Activated CD4-positive, alpha-beta T cell treated with anti-CD3 and anti-CD28 coated beads for 36 hours (primary cell): ENCODE measurements at regions of chr9 and their contacts with region 1.

Region 1: GRCh38 chr9:20552874-20553575 is 69.3 kb downstream of the MLLT3 start:
- DNase-seq: no peak
- ATAC-seq: peak; percentile 37
- H3K4me3 Mint-ChIP-seq: no peak overlapping the region
- H3K27ac Mint-ChIP-seq: peak overlapping the region; percentile 28
- H3K4me1 Mint-ChIP-seq: peaks cover 68% of the 10 kb centered on the region
- H3K27me3 Mint-ChIP-seq: no peaks in the 10 kb centered on the region

Region 2: DNA sequence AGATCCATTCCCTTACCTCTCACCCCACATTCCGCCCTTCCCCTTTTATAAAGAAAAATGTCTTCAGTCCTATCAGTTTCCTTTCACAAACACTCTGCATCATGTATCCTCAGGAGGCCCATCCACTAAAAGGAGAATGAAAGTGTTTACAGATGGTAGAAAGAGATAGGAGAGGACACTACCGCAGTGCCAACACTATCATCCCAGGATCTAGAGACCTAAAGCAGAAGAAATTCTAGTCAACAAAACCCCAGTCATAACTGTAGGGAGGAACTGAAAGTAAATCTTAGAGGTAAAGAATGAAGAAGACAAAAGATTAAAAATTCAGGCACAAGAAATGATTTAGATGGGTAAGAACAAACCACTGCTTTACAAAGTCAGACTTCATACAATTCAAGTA is 44.8 kb before region 1 on chr9:
- CTCF ChIA-PET with region 1: no interaction called
- POLR2A ChIA-PET with region 1: no interaction called
- intact Hi-C with region 1: loop called in 1 of 2 experiments (anchors 5 kb)
- DNase-seq: no peak
- ATAC-seq: peak; percentile 79
- H3K4me3 Mint-ChIP-seq: peak overlapping the region; percentile 27
- H3K27ac Mint-ChIP-seq: peak overlapping the region; percentile 22
- H3K4me1 Mint-ChIP-seq: peaks cover 81% of the 10 kb centered on the region
- H3K27me3 Mint-ChIP-seq: no peaks in the 10 kb centered on the region